MCF 10A (cell line): ENCODE measurements at regions of chr7 and their contacts with region 1.

Region 1: DNA sequence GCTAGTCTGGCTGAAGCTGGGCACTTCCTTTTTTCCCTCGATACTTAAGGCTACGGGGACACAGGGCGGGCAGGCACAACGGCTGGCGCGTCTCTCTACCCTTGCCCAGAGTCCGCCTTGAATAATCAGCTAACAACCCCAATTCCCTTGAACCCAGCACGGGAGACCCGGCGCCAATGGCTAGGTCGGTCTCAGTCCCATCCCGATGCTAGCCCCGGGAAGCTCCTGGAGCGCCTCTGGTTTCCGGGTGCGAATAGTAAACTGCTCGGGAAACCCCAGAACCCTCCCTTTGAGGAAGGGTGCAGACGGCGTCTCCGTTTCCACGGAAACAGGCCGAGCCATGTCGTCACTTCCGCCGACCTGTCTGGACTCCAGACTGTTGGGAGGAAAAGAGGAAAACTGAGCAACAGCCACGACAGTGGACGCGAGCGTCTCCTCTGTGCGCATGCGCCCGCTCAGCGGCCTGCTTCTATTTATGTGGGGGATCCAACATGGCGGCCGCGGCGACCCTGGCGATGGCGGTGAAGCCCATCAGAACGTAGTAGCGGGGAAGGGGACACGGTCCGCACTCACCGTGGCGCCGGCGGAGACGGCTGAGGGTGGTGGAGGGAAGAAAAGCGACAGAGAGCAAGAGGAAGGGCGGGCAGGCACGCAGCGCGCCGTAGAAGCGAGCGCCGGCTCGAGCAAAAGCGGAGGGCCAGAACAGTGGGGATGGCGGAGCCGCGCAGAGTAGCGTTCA is at the start of gene UBN2:
- DNase-seq: peak; percentile 96
- H3K4me3 Mint-ChIP-seq: peak within 1 kb of the TSS; percentile 95
- H3K27ac Mint-ChIP-seq: peak within 1 kb of the TSS; percentile 99
- H3K4me1 Mint-ChIP-seq: peaks cover 9% of the 10 kb centered on the region
- H3K27me3 Mint-ChIP-seq: no peaks in the 10 kb centered on the region
- CTCF ChIP-seq: no peak
- total RNA-seq, gene UBN2: 18.7 and 25.3 TPM in 2 replicates

Region 2: GRCh38 chr7:139016931-139017511 is 213.9 kb before region 1 on chr7:
- CTCF ChIA-PET with region 1: no interaction called
- POLR2A ChIA-PET with region 1: no interaction called
- intact Hi-C with region 1: no loop called
- DNase-seq: peak; percentile 77
- H3K4me3 Mint-ChIP-seq: no peak overlapping the region
- H3K27ac Mint-ChIP-seq: no peak overlapping the region
- H3K4me1 Mint-ChIP-seq: peaks cover 5% of the 10 kb centered on the region
- H3K27me3 Mint-ChIP-seq: peaks cover 26% of the 10 kb centered on the region
- CTCF ChIP-seq: peak; percentile 62

Region 3: DNA sequence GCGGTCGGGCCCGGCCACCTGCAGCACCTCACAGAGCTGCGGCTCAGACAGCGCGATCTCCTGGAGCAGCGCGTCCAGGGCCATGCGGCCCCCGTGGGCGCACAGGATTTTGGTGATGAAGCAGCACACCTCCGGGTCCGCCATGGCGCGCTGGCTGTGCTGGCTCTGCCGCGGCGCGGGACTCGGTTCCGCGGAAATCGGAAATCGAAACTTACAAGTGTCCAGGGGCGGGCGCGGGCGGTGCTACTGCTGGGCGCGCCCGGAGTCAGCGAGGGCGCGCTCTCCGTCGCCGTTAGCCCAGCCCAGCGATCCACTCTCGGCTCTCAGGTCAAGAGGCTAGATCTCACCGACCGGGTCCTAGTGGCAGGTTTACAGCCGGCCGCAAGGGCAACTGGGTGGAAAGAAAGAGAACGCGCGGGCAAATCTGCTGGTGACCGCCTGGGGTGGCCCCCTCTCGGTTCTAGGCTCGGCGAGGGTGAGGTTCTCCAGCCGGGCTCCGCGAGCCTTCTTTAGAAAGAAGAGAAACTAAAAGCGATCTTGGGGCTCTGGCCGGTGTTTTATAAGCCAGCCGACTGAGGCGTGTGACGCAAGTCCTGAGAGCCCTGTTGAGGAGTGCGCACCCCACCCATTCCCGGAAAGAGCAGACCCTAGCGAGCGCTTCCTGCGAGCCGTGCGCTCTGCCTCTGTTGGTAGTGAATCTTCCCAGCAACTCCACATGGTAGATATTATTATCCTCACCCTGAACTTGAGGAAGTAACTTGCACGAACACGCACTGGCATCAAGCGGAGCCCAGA is 121.6 kb before region 1 on chr7 and contains the start of gene ZC3HAV1:
- CTCF ChIA-PET with region 1: no interaction called
- POLR2A ChIA-PET with region 1: interaction called, 5 read pairs
- intact Hi-C with region 1: loop called (anchors 1 kb)
- DNase-seq: peak; percentile 83
- H3K4me3 Mint-ChIP-seq: peak within 1 kb of the TSS; percentile 95
- H3K27ac Mint-ChIP-seq: peak within 1 kb of the TSS; percentile 91
- H3K4me1 Mint-ChIP-seq: peaks cover 33% of the 10 kb centered on the region
- H3K27me3 Mint-ChIP-seq: no peaks in the 10 kb centered on the region
- CTCF ChIP-seq: no peak
- total RNA-seq, gene ZC3HAV1: 14.2 and 25.7 TPM in 2 replicates

Region 4: DNA sequence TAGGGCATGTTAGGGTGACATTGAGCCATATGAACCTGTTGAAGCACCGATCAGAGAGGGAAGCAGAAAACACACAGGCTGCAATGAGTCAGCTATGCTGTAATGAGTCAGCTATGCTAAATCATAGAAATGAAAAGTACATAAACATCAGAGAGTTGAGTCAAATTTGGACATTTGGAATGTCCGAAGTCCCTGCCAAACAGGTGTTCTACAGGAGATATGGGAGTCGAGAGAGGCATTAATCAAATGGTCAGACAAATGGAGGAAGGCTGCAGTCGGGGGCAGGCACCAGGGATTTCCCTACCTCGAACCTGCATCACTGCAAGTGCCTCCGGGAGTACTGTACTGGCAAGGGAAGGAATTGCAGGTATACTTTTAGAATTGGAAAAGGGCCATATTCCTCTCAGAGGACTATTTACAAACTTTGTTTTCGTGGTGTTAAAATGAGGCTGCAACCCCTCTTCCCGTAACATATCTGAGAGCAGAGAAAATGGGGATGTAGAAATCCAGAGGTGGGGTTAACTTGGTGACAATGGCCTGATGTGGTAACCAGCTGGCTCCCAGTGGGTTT is 112.6 kb before region 1 on chr7:
- CTCF ChIA-PET with region 1: no interaction called
- POLR2A ChIA-PET with region 1: interaction called, 15 read pairs
- intact Hi-C with region 1: no loop called
- DNase-seq: peak; percentile 81
- H3K4me3 Mint-ChIP-seq: peak overlapping the region; percentile 51
- H3K27ac Mint-ChIP-seq: peak overlapping the region; percentile 47
- H3K4me1 Mint-ChIP-seq: peaks cover 18% of the 10 kb centered on the region
- H3K27me3 Mint-ChIP-seq: peaks cover 3% of the 10 kb centered on the region
- CTCF ChIP-seq: no peak

Region 5: GRCh38 chr7:139133335-139134139 is 97.4 kb before region 1 on chr7:
- CTCF ChIA-PET with region 1: interaction called, 3 read pairs
- POLR2A ChIA-PET with region 1: interaction called, 37 read pairs
- intact Hi-C with region 1: no loop called
- DNase-seq: peak; percentile 86
- H3K4me3 Mint-ChIP-seq: peak overlapping the region; percentile 79
- H3K27ac Mint-ChIP-seq: peak overlapping the region; percentile 88
- H3K4me1 Mint-ChIP-seq: no peaks in the 10 kb centered on the region
- H3K27me3 Mint-ChIP-seq: peaks cover 4% of the 10 kb centered on the region
- CTCF ChIP-seq: no peak

Region 6: GRCh38 chr7:139242741-139243281 is 11.9 kb after region 1 on chr7:
- CTCF ChIA-PET with region 1: interaction called, 3 read pairs
- POLR2A ChIA-PET with region 1: interaction called, 98 read pairs
- intact Hi-C with region 1: loop called (anchors 1 kb)
- DNase-seq: peak; percentile 49
- H3K4me3 Mint-ChIP-seq: no peak overlapping the region
- H3K27ac Mint-ChIP-seq: peak overlapping the region; percentile 82
- H3K4me1 Mint-ChIP-seq: peaks cover 36% of the 10 kb centered on the region
- H3K27me3 Mint-ChIP-seq: no peaks in the 10 kb centered on the region
- CTCF ChIP-seq: no peak

Region 7: DNA sequence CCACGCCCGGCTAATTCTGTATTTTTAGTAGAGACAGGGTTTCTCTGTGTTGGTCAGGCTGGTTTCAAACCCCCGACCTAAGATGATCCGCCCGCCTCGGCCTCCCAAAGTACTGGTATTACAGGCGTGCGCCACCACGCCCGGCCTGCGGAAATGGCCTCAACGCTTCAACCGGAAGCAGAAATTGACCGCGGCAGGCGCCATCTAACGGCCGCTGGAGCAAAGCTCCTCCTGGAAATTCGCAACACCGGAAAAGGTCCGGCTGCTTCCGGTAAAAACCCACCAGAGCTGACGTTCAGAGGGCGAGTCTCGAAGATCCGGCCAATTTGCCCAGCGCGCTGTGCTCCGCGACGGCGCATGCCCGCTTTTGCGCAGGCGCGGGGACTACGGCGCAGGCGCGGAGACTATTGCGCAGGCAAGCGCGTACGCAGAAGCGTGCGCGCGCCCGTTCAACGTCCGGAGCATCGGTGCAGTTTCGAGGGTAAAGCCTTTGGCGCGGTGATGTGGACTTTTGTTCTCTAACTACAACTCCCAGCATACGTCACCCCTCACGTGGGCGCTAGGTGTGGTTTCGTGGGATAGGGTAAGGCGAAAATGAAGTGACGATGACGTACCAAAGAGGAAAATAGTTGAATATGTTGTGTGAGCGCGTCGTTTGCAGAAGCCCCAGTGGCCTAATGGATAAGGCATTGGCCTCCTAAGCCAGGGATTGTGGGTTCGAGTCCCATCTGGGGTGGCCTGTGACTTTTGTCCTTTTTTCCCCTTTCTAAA is 109.3 kb after region 1 on chr7:
- CTCF ChIA-PET with region 1: interaction called, 3 read pairs
- POLR2A ChIA-PET with region 1: interaction called, 19 read pairs
- intact Hi-C with region 1: loop called (anchors 2 kb)
- DNase-seq: peak; percentile 100
- H3K4me3 Mint-ChIP-seq: peak overlapping the region; percentile 94
- H3K27ac Mint-ChIP-seq: peak overlapping the region; percentile 99
- H3K4me1 Mint-ChIP-seq: peaks cover 6% of the 10 kb centered on the region
- H3K27me3 Mint-ChIP-seq: no peaks in the 10 kb centered on the region
- CTCF ChIP-seq: peak; percentile 59

Region 8: DNA sequence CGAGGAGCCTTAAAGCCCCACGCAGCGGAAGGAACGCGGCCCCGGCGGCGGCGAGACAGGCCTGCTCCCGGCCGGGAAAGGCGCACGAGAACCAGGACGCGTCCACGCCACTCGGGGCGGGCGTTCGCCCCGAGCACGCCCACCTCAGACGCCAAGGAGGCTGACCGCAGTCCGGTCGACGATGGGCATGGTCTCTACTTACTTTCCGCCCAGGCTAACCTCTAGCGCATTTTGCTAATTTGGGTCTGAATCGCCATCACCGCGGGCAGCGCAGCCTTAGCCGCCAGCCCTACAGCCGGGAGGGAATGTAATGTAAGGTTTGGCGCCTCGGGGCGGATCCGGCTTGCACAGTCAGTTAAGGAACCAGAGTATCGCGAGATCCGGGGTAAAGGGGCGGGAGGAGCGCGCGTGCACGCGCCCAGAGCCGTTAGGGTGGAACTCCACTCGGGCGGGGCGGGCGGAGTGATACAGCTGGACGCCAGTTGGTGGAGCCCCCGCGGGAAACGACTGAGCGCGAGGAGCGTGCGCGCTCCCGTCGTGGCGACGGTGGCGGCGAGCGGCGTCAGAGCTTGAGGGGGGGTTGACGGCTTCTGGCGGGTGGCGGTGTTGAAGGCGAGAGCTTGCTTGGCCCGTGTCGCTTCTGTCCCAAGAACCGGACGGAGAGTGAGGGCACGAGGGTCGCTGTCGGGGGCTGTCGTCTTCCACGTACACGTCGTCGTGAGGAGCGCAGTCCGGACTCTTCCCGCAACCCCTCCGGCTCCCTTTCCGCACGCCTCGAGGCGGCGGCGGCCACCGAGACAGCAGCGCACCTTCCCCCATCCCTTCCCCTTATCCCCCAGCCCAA is 128.6 kb after region 1 on chr7 and contains the start of gene LUC7L2:
- CTCF ChIA-PET with region 1: no interaction called
- POLR2A ChIA-PET with region 1: interaction called, 41 read pairs
- intact Hi-C with region 1: no loop called
- DNase-seq: peak; percentile 98
- H3K4me3 Mint-ChIP-seq: peak within 1 kb of the TSS; percentile 99
- H3K27ac Mint-ChIP-seq: peak within 1 kb of the TSS; percentile 96
- H3K4me1 Mint-ChIP-seq: peaks cover 29% of the 10 kb centered on the region
- H3K27me3 Mint-ChIP-seq: no peaks in the 10 kb centered on the region
- CTCF ChIP-seq: no peak
- total RNA-seq, gene LUC7L2: 138 and 145 TPM in 2 replicates

Region 9: GRCh38 chr7:139645572-139646523 is 414.9 kb after region 1 on chr7:
- CTCF ChIA-PET with region 1: no interaction called
- POLR2A ChIA-PET with region 1: no interaction called
- intact Hi-C with region 1: no loop called
- DNase-seq: peak; percentile 93
- H3K4me3 Mint-ChIP-seq: no peak overlapping the region
- H3K27ac Mint-ChIP-seq: peak overlapping the region; percentile 43
- H3K4me1 Mint-ChIP-seq: peaks cover 21% of the 10 kb centered on the region
- H3K27me3 Mint-ChIP-seq: no peaks in the 10 kb centered on the region
- CTCF ChIP-seq: peak; percentile 93